Ovary (tissue), 10 donors: ENCODE measurements at regions of chr12 and their contacts with region 1.

Region 1: GRCh38 chr12:55996715-55997534 is at the start of gene SUOX:
- DNase-seq: peak; percentile 94 to 97 (median 96)
- H3K4me3 ChIP-seq: peak within 1 kb of the TSS; percentile 52
- H3K27ac ChIP-seq: peak within 1 kb of the TSS; percentile 7 to 80
- H3K4me1 ChIP-seq: peaks cover 3% of the 10 kb centered on the region
- H3K27me3 ChIP-seq: no peaks in the 10 kb centered on the region
- CTCF ChIP-seq: no peak
- EP300 ChIP-seq: no peak
- POLR2A ChIP-seq: peak; percentile 6
- total RNA-seq, gene SUOX: 22.1 to 39.4 (median 31.9) TPM

Region 2: DNA sequence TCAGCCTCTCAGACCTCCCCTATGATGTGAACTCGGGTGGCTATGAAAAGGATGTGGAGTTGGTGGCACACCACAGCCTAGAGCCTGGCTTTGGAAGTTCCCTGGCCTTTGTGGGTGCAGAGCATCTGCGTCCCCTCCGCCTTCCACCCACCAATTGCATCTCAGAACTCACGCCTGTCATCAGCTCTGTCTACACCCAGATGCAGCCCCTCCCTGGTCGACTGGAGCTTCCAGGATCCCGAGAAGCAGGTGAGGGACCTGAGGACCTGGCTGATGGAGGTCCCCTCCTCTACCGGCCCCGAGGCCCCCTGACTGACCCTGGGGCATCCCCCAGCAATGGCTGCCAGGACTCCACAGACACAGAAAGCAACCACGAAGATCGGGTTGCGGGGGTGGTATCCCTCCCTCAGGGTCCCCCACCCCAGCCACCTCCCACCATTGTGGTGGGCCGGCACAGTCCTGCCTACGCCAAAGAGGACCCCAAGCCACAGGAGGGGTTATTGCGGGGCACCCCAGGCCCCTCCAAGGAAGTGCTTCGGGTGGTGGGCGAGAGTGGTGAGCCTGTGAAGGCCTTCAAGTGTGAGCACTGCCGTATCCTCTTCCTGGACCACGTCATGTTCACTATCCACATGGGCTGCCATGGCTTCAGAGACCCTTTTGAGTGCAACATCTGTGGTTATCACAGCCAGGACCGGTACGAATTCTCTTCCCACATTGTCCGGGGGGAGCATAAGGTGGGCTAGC is 37.8 kb after region 1 on chr12:
- intact Hi-C with region 1: loop called in 1 of 4 experiments (anchors 5 kb)
- DNase-seq: no peak
- H3K4me3 ChIP-seq: no peak overlapping the region
- H3K27ac ChIP-seq: no peak overlapping the region
- H3K4me1 ChIP-seq: no peaks in the 10 kb centered on the region
- H3K27me3 ChIP-seq: no peaks in the 10 kb centered on the region
- CTCF ChIP-seq: no peak
- EP300 ChIP-seq: no peak
- POLR2A ChIP-seq: no peak

Region 3: GRCh38 chr12:56041552-56042429 is 44.9 kb after region 1 on chr12 and contains the start of gene RPS26:
- intact Hi-C with region 1: loop called (anchors 2 to 10 kb)
- DNase-seq: peak; percentile 96 to 98 (median 97)
- H3K4me3 ChIP-seq: peak within 1 kb of the TSS; percentile 85
- H3K27ac ChIP-seq: peak within 1 kb of the TSS; percentile 84 to 94
- H3K4me1 ChIP-seq: no peaks in the 10 kb centered on the region
- H3K27me3 ChIP-seq: no peaks in the 10 kb centered on the region
- CTCF ChIP-seq: peak in 2 of 3 donors; percentile 35 to 36
- EP300 ChIP-seq: peak; percentile 54
- POLR2A ChIP-seq: peak; percentile 94
- total RNA-seq, gene RPS26: 16.2 to 2,562 (median 59.7) TPM

Region 4: GRCh38 chr12:56321027-56321426 is 324.1 kb after region 1 on chr12:
- intact Hi-C with region 1: no loop called
- DNase-seq: no peak
- H3K4me3 ChIP-seq: no peak overlapping the region
- H3K27ac ChIP-seq: no peak overlapping the region
- H3K4me1 ChIP-seq: no peaks in the 10 kb centered on the region
- H3K27me3 ChIP-seq: no peaks in the 10 kb centered on the region
- CTCF ChIP-seq: no peak
- EP300 ChIP-seq: no peak
- POLR2A ChIP-seq: no peak